ENCODE measurements at regions of chr9 and their contacts with region 1.

Region 1: DNA sequence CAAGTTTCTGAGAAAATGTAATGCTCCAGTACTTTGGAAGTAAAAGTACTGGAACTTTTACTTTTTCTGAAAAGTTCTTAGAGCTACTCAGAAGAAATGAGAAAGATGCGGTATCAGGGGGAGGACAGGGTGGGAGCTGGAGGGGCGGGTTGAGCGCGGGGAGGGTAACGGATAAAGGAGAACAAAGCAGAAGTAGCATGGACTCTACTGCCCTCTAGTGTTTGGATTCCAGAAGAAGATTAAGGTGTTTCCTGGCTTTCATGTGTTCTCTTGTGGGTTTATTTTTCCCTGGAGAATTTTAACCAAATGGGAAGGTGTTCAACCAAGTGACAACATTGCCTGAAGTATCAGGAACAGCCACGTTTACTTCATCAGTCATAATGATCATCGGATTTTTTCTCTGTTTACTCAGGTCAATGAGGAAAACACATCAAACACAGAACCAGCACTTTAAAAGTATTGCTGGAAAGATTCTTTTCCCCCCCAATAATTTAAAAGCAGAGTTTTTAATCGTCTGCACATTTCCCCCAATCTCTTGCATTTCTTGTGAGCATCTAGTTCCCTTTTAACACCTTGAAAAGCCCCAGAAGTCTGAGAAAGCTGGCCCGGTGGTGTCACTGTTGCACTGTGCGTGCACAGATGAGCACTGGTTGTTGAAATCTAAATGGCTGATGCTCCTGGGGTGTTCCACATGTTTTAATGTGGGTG is 190.6 kb downstream of the MPDZ start:
- DNase-seq: peak; percentile 35
- H3K4me3 ChIP-seq: no peak overlapping the region
- H3K27ac ChIP-seq: no peak overlapping the region
- H3K4me1 ChIP-seq: peaks cover 5% of the 10 kb centered on the region
- H3K27me3 ChIP-seq: no peaks in the 10 kb centered on the region
- CTCF ChIP-seq: peak; percentile 53 to 65

Region 2: DNA sequence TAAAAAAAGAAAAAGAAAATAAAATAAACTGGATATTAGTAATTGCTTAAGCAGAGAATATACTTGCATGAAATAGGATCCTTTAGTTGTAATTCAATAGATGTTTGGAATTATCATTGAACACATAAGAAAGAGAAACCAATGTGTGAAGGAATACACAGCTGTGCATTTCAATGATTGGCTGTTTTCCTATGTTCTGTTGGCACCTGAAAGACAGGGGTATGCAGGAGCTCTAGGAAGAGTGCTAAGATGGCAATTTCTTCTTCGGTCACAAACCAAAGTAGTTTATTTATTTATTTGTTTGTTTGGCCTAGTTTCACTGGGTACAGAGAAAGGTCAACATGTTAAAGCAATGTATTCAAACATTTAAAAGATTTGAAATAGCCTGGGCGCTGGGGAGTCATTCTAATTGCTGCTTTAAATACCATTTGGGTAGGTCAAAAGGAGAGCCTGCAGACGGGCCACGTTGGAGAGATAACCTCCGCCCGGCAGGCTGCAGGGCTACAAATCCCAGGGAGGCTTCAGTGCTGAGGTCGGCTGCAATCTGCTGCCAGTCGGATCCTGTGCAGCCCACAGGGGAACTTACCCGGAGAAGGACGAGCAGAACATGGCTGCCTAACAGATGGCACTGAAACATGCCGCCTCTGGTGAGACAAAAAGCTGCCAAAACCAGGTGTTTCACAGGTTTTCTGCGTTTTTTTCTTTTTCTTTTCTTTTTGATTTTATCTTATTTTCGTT is 549.9 kb before region 1 on chr9:
- CTCF ChIA-PET with region 1: no interaction called
- dilution Hi-C with region 1: no loop called
- in situ Hi-C with region 1: no loop called
- intact Hi-C with region 1: no loop called
- DNase-seq: no peak
- H3K4me3 ChIP-seq: no peak overlapping the region
- H3K27ac ChIP-seq: no peak overlapping the region
- H3K4me1 ChIP-seq: no peaks in the 10 kb centered on the region
- H3K27me3 ChIP-seq: no peaks in the 10 kb centered on the region
- CTCF ChIP-seq: no peak

Region 3: GRCh38 chr9:12726795-12727194 is 362.1 kb before region 1 on chr9:
- CTCF ChIA-PET with region 1: interaction called, 5 read pairs
- dilution Hi-C with region 1: loop called (anchors 5 kb)
- in situ Hi-C with region 1: no loop called
- intact Hi-C with region 1: no loop called
- DNase-seq: no peak
- H3K4me3 ChIP-seq: no peak overlapping the region
- H3K27ac ChIP-seq: no peak overlapping the region
- H3K4me1 ChIP-seq: no peaks in the 10 kb centered on the region
- H3K27me3 ChIP-seq: no peaks in the 10 kb centered on the region
- CTCF ChIP-seq: no peak

Region 4: GRCh38 chr9:12884737-12885414 is 204.0 kb before region 1 on chr9:
- CTCF ChIA-PET with region 1: no interaction called
- dilution Hi-C with region 1: no loop called
- in situ Hi-C with region 1: no loop called
- intact Hi-C with region 1: loop called (anchors 5 kb)
- DNase-seq: peak; percentile 77
- H3K4me3 ChIP-seq: no peak overlapping the region
- H3K27ac ChIP-seq: no peak overlapping the region
- H3K4me1 ChIP-seq: no peaks in the 10 kb centered on the region
- H3K27me3 ChIP-seq: no peaks in the 10 kb centered on the region
- CTCF ChIP-seq: peak; percentile 61 to 71

Region 5: DNA sequence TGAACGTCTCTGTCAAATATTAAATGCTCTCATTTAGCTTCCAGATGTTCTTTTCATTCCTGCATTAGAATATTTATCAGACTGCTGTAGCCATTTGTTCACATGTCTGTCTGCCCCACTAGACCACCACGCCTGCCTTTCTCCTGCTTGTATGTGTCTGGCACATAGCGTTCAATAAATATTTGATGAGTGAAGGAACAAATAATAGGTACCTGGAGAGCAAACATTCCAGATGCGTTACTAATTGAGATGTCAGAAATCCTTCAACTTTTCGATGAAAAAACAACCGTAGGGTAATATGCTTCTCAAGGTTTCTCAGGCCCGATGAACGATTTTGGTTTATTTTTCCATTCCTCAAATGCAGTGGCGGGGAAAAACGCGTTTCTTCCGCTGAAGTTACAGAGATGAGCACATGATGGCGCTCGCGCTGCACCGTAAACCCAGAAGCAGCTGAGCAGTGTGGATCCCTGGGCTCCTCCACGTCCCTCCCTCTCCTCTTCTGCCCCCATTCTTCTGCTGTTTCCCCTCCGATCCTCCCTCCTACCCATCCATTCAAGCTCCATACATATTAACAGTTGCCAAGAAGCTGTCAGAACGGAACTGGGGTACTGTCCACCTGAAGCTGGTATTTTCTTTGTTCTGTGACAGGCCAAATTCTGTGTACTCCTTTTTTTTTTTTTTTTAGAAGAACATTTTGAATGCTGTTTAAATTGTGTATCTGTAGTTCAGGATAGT is 54.7 kb before region 1 on chr9:
- CTCF ChIA-PET with region 1: no interaction called
- dilution Hi-C with region 1: loop called (anchors 5 kb)
- in situ Hi-C with region 1: loop called in 1 of 2 experiments (anchors 5 kb)
- intact Hi-C with region 1: loop called (anchors 1 kb)
- DNase-seq: peak; percentile 47
- H3K4me3 ChIP-seq: peak overlapping the region in 1 of 3 experiments; percentile 24
- H3K27ac ChIP-seq: no peak overlapping the region
- H3K4me1 ChIP-seq: no peaks in the 10 kb centered on the region
- H3K27me3 ChIP-seq: no peaks in the 10 kb centered on the region
- CTCF ChIP-seq: peak; percentile 83

Region 6: GRCh38 chr9:14412775-14413174 is 1323.9 kb after region 1 on chr9:
- CTCF ChIA-PET with region 1: interaction called, 10 read pairs
- dilution Hi-C with region 1: no loop called
- in situ Hi-C with region 1: no loop called
- intact Hi-C with region 1: no loop called
- DNase-seq: no peak
- H3K4me3 ChIP-seq: no peak overlapping the region
- H3K27ac ChIP-seq: no peak overlapping the region
- H3K4me1 ChIP-seq: no peaks in the 10 kb centered on the region
- H3K27me3 ChIP-seq: peaks cover 17% of the 10 kb centered on the region
- CTCF ChIP-seq: no peak